ENCODE measurements at regions of chr1 and their contacts with region 1.

Region 1: GRCh38 chr1:52002038-52002917 is 11.8 kb upstream of the RAB3B start:
- DNase-seq: peak; percentile 75
- H3K4me3 ChIP-seq: no peak overlapping the region
- H3K27ac ChIP-seq: no peak overlapping the region
- H3K4me1 ChIP-seq: peaks cover 11% of the 10 kb centered on the region
- H3K27me3 ChIP-seq: no peaks in the 10 kb centered on the region
- CTCF ChIP-seq: peak; percentile 92 to 97

Region 2: DNA sequence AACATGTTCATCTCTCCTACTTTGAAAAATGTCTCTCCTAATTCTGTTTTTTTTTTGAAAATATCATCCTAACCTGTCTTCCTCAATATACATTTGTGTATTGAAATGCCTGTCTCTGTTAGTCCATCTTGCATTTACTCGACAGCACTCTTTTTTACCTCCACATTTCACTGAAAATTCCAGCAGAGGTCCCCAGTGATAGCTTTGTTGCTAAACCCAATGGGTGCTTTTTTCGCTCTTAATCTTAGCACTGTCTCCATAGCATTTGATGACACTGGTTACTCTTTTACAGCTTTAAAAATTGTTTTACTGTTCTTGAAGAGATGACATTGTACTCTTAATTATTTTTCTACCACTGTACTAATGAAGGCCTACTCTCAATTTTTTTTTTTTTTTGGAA is 374.6 kb before region 1 on chr1:
- CTCF ChIA-PET with region 1: no interaction called
- dilution Hi-C with region 1: no loop called
- in situ Hi-C with region 1: no loop called
- intact Hi-C with region 1: loop called (anchors 1 kb)
- DNase-seq: peak; percentile 52
- H3K4me3 ChIP-seq: no peak overlapping the region
- H3K27ac ChIP-seq: no peak overlapping the region
- H3K4me1 ChIP-seq: peaks cover 9% of the 10 kb centered on the region
- H3K27me3 ChIP-seq: no peaks in the 10 kb centered on the region
- CTCF ChIP-seq: peak; percentile 36 to 63

Region 3: DNA sequence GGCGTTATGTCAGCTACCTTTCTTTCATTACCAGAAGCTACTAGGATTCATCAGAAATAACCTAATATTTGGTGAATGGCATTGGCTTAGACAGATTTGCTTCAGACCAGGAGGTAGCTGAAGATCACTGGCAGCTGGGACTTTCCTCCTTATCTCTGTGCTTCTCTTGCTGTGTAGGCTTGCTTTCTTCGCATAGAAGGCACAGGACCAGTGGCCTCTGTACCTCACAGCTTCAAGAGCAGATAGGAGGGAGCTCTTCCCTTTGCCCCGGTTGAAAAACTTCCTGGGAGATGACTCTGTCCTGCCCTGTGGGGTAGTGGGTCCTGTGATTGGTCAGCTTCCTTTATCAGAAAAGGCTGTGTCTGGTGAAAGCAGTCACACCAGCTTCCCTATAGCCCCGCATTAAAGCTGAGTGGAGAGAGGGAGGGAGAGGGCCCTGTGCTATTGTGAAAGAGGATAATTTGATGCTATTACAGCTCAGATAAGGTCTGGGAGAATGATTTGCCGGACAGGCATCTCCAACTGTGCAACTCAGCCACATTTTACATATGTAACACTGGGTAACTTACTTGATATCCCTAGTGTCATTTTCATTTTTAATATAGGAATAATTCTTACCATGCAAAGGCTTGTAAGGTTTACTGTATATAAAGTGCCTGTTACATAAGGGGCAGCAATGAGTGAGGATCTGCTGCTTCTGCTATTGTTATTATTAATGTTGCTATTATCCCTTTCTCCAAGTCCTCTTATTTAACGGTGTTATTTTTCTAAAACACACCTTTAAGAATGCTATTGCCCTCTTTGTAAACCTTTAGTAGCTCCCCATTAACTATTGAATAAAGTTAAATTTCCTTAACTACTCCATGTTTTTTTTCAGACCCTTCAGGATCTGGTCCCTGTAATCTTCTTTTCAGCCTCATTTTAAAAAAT is 353.8 kb before region 1 on chr1:
- CTCF ChIA-PET with region 1: no interaction called
- dilution Hi-C with region 1: no loop called
- in situ Hi-C with region 1: no loop called
- intact Hi-C with region 1: no loop called
- DNase-seq: no peak
- H3K4me3 ChIP-seq: no peak overlapping the region
- H3K27ac ChIP-seq: no peak overlapping the region
- H3K4me1 ChIP-seq: peaks cover 4% of the 10 kb centered on the region
- H3K27me3 ChIP-seq: no peaks in the 10 kb centered on the region
- CTCF ChIP-seq: no peak

Region 4: GRCh38 chr1:51878616-51879336 is 123.5 kb before region 1 on chr1 and contains the start of gene NRDC:
- CTCF ChIA-PET with region 1: no interaction called
- dilution Hi-C with region 1: no loop called
- in situ Hi-C with region 1: no loop called
- intact Hi-C with region 1: loop called (anchors 5 kb)
- DNase-seq: peak; percentile 100
- H3K4me3 ChIP-seq: peak within 1 kb of the TSS; percentile 74 to 100 (median 92)
- H3K27ac ChIP-seq: peak within 1 kb of the TSS; percentile 97
- H3K4me1 ChIP-seq: peaks cover 8% of the 10 kb centered on the region
- H3K27me3 ChIP-seq: no peaks in the 10 kb centered on the region
- CTCF ChIP-seq: no peak
- total RNA-seq, gene NRDC: 61.7 to 154 TPM

Region 5: DNA sequence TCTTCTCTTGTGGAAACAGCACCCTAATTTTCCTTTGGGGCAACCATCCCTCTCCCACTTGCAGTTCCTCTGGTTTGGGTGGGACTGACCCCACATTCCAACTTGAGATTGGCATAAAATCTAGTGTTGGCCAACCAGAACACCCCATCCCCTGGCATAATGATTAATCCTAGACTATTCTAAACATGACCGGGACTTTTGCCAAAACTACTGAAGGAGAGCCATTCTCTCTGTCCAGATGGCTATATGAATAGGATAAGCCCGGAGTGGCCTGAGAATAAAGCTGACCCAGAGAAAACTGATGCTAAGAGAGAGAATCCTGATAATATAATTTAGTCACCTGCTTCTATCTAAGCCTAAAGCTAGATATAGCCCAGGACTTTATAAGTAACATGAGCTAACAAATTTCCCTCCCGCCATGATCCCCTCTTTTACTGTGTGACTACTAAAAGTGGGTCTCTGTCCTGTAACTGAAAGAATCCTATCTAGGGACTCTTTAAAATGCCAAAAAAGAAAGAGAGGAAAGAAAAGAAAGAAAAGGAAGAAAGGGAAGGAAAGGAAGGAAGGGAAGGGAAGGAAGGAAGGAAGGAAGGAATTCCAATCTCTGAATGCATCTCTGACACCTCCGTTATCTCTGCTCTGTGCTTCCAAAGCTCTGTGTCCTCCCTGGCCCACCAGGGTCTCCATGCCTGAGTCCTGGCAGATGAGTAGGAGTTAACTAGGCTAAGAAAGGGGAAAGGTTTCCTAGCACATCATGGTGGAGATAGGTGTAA is 95.8 kb before region 1 on chr1:
- CTCF ChIA-PET with region 1: no interaction called
- dilution Hi-C with region 1: no loop called
- in situ Hi-C with region 1: loop called in 1 of 2 experiments (anchors 5 kb)
- intact Hi-C with region 1: no loop called
- DNase-seq: no peak
- H3K4me3 ChIP-seq: no peak overlapping the region
- H3K27ac ChIP-seq: no peak overlapping the region
- H3K4me1 ChIP-seq: no peaks in the 10 kb centered on the region
- H3K27me3 ChIP-seq: no peaks in the 10 kb centered on the region
- CTCF ChIP-seq: no peak

Region 6: GRCh38 chr1:51936531-51936930 is 65.7 kb before region 1 on chr1:
- CTCF ChIA-PET with region 1: no interaction called
- dilution Hi-C with region 1: no loop called
- in situ Hi-C with region 1: no loop called
- intact Hi-C with region 1: loop called (anchors 2 kb)
- DNase-seq: no peak
- H3K4me3 ChIP-seq: no peak overlapping the region
- H3K27ac ChIP-seq: no peak overlapping the region
- H3K4me1 ChIP-seq: no peaks in the 10 kb centered on the region
- H3K27me3 ChIP-seq: no peaks in the 10 kb centered on the region
- CTCF ChIP-seq: peak in 1 of 2 donors; percentile 33